ENCODE measurements at regions of chr4 and their contacts with region 1.

Region 1: GRCh38 chr4:128854433-128854832 is 44.9 kb downstream of the JADE1 start:
- DNase-seq: peak; percentile 35
- CTCF ChIP-seq: no peak

Region 2: GRCh38 chr4:128840711-128841318 is 13.6 kb before region 1 on chr4:
- CTCF ChIA-PET with region 1: interaction called, 11 read pairs
- POLR2A ChIA-PET with region 1: no interaction called
- DNase-seq: no peak
- CTCF ChIP-seq: no peak

Measured in GM10248 (cell line).